Endothelial cell of umbilical vein (primary cell): ENCODE measurements at regions of chr7 and their contacts with region 1.

Region 1: DNA sequence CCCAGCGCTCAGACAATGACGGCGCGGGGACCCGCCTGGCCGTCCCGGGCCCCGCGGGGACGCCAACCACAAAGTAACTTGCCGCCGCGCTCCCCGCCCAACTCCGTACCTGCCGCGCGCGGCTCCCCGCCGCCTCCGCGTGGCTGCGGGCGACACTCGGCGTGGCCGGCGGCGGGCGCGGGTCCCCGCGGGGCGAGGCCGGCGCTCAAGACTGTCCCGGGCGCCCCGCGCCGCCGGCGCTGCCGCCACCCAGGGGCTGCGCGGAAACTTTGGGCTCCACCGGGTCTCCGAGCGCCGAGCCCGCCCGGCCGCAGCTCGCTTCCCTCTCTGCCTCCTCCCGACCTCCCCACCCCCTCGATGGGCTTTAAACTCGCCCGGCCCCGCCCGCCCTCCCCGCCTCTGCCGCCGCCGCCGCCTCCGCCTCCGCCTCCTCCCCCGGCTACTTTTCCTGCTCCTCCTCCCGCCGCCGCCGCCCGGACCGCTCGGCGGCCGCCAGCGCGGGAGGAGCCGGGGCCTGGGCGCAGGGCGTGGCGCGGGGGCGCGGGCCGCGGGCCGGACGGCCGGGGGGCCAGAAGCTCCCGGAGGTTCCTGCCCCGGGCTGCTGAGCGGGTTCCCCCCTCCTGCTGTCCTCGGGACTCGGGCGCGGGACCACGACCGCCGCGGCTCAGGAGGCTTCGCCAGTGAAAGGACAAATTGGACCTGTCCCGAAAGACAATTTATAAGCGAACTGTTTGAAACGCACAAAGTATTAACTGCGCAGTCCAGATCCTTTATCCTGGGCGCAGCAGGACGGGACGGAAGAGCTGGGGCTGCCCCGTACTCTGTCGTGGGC is 10.6 kb upstream of the GRB10 start:
- DNase-seq: peak; percentile 50
- H3K4me3 ChIP-seq: peak overlapping the region; percentile 40 to 91 (median 52)
- H3K27ac ChIP-seq: peak overlapping the region; percentile 77
- H3K4me1 ChIP-seq: peaks cover 24% of the 10 kb centered on the region
- H3K27me3 ChIP-seq: no peaks in the 10 kb centered on the region
- CTCF ChIP-seq: no peak
- POLR2A ChIP-seq: peak; percentile 73

Region 2: GRCh38 chr7:50665417-50666123 is 127.8 kb before region 1 on chr7:
- CTCF ChIA-PET with region 1: no interaction called
- POLR2A ChIA-PET with region 1: no interaction called
- dilution Hi-C with region 1: no loop called
- intact Hi-C with region 1: loop called (anchors 5 kb)
- DNase-seq: no peak
- H3K4me3 ChIP-seq: no peak overlapping the region
- H3K27ac ChIP-seq: peak overlapping the region; percentile 64
- H3K4me1 ChIP-seq: peaks cover 49% of the 10 kb centered on the region
- H3K27me3 ChIP-seq: no peaks in the 10 kb centered on the region
- CTCF ChIP-seq: no peak
- POLR2A ChIP-seq: no peak

Region 3: DNA sequence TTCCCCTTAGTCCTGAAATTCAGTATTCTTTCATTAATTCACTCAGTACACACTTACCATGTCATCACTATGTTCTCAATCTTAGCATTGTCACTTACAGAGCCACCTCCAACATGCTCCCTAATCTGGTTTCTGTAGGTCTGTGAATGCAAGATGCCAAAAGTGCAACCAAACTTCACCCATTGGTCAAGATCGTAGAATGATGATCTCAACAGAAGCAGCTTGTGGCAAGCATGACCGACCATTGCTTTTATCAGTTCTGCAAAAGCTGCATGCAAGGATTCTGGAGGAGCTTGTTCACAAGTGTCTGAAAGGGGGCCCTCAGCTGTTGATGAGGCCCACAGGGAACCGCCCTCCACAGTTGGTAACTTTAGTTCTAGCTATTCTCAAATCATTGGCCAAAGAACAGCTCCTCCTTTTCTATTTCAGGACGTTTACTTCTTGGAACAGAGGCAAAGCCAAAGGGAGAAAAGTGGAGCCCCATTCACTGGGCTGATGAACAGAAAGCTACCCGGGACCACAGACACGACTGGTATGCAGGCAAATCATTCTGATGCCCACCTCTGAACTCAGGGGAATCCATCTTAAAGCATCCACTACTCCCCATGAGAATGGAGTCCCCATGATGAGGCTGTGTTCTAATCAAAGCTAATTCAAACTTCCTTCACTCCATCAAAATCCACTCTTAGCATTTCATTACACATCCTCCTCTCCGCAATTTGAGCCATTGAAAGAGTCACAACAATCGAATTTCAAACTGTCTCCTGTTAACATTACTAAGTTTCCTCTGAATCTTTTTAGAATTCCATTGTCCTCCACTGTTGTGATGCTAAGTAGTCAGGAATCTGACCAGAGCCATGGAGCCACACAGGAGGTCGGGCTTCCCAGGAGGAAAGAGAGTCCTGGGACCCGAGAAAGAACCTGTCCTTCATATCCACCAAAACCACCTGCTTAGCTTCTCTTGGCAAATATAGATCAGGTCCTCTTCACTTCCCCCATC is 24.5 kb before region 1 on chr7:
- CTCF ChIA-PET with region 1: no interaction called
- POLR2A ChIA-PET with region 1: no interaction called
- dilution Hi-C with region 1: no loop called
- intact Hi-C with region 1: no loop called
- DNase-seq: no peak
- H3K4me3 ChIP-seq: no peak overlapping the region
- H3K27ac ChIP-seq: no peak overlapping the region
- H3K4me1 ChIP-seq: peaks cover 10% of the 10 kb centered on the region
- H3K27me3 ChIP-seq: no peaks in the 10 kb centered on the region
- CTCF ChIP-seq: no peak
- POLR2A ChIP-seq: no peak

Region 4: DNA sequence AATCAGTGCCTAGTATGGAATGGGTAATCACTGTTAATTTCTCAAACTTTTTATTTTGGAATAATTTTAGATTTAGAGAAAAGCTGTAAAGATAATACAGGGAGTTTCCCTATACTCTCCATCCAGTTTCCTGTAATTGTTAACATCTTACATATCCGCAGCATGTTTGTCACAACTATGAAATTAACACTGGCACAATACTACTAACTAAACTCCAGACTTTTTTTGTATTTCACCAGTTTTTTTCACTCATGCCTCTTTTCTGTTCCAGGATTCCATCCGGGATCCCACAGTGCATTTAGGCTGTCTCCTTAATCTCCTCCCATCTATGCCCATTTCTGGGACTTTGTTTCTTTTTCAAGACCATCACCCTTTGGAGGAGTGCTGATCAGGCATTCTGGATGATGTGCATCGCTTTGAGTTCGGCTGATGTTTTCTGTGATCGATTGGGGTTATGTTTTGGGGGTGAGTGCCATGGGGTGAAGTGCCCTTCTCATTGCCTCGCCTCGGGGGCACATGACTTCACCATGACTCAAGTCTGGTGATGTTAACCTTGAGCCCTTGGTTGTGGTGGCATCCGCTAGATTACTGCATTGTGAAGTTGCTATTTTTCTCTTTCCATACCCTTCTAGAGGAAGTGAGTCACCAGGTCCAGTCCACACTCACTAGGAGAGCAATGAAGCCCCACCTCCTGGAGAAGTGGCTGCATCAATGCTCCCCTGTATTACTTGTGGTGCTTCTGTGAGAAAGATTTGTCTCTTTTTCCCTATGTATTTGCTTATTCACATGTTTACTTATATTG is 33.2 kb after region 1 on chr7:
- CTCF ChIA-PET with region 1: interaction called, 3 read pairs
- POLR2A ChIA-PET with region 1: no interaction called
- dilution Hi-C with region 1: no loop called
- intact Hi-C with region 1: loop called (anchors 2 kb)
- DNase-seq: peak; percentile 97
- H3K4me3 ChIP-seq: peak overlapping the region in 1 of 3 experiments; percentile 20
- H3K27ac ChIP-seq: peak overlapping the region; percentile 99
- H3K4me1 ChIP-seq: peaks cover 34% of the 10 kb centered on the region
- H3K27me3 ChIP-seq: no peaks in the 10 kb centered on the region
- CTCF ChIP-seq: peak in 1 of 2 donors; percentile 14
- POLR2A ChIP-seq: peak; percentile 43

Region 5: DNA sequence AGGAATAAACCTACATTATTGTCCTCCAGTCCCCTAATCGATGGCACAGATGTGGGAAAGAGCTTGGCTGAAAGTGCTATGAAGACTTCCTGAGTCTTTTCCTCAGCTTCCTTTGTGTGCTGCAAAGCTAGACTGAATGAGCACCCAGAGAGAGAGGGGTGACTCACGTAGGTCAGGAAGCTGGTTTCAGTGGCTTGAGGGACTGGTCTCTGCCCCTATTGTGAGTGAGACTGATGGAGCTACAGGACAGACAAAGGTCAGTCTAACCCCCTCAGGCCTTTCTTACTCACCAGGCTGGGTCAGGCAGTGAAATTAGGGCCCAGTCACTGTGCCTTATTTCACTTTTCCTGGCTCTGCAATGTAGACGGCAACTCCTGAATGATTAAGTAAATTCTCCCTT is 160.5 kb after region 1 on chr7:
- CTCF ChIA-PET with region 1: interaction called, 3 read pairs
- POLR2A ChIA-PET with region 1: no interaction called
- dilution Hi-C with region 1: no loop called
- intact Hi-C with region 1: loop called (anchors 2 kb)
- DNase-seq: peak; percentile 81
- H3K4me3 ChIP-seq: no peak overlapping the region
- H3K27ac ChIP-seq: peak overlapping the region; percentile 85
- H3K4me1 ChIP-seq: peaks cover 57% of the 10 kb centered on the region
- H3K27me3 ChIP-seq: no peaks in the 10 kb centered on the region
- CTCF ChIP-seq: no peak
- POLR2A ChIP-seq: peak; percentile 33

Region 6: DNA sequence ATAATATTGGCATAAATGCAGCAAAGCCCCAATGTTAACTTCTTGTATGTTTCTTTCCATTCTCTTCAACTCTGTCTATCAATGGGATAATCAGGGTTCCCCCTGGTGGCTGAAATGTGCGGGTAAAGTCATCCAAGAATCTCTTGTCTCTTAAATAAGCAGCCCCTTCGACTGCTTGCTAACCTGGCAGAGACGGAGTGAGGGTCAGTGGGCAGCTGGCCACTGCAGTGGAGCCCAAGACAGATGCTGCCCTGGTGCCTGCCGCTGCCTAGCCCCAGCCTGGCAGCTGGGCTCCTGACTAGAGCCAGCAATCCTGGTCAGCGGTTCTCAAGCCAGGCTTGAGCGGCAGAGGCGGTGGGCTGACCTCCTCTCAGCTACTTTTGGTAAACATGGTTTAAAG is 274.4 kb after region 1 on chr7:
- CTCF ChIA-PET with region 1: interaction called, 8 read pairs
- POLR2A ChIA-PET with region 1: no interaction called
- dilution Hi-C with region 1: no loop called
- intact Hi-C with region 1: loop called (anchors 2 kb)
- DNase-seq: peak; percentile 89
- H3K4me3 ChIP-seq: no peak overlapping the region
- H3K27ac ChIP-seq: no peak overlapping the region
- H3K4me1 ChIP-seq: peaks cover 26% of the 10 kb centered on the region
- H3K27me3 ChIP-seq: no peaks in the 10 kb centered on the region
- CTCF ChIP-seq: peak; percentile 69 to 70
- POLR2A ChIP-seq: no peak

Region 7: GRCh38 chr7:52273685-52274610 is 1480.6 kb after region 1 on chr7:
- CTCF ChIA-PET with region 1: no interaction called
- POLR2A ChIA-PET with region 1: no interaction called
- dilution Hi-C with region 1: no loop called
- intact Hi-C with region 1: no loop called
- DNase-seq: no peak
- H3K4me3 ChIP-seq: no peak overlapping the region
- H3K27ac ChIP-seq: no peak overlapping the region
- H3K4me1 ChIP-seq: peaks cover 25% of the 10 kb centered on the region
- H3K27me3 ChIP-seq: no peaks in the 10 kb centered on the region
- CTCF ChIP-seq: no peak
- POLR2A ChIP-seq: no peak